ENCODE measurements at regions of chr9 and their contacts with region 1.

Region 1: GRCh38 chr9:15086778-15087324 is 176.6 kb upstream of the FREM1 start:
- DNase-seq: no peak
- H3K4me3 ChIP-seq: no peak overlapping the region
- H3K27ac ChIP-seq: no peak overlapping the region
- H3K4me1 ChIP-seq: no peaks in the 10 kb centered on the region
- H3K27me3 ChIP-seq: no peaks in the 10 kb centered on the region
- CTCF ChIP-seq: no peak
- POLR2A ChIP-seq: no peak

Region 2: GRCh38 chr9:15469406-15469805 is 382.6 kb after region 1 on chr9:
- intact Hi-C with region 1: loop called (anchors 5 kb)
- DNase-seq: no peak
- H3K4me3 ChIP-seq: no peak overlapping the region
- H3K27ac ChIP-seq: no peak overlapping the region
- H3K4me1 ChIP-seq: no peaks in the 10 kb centered on the region
- H3K27me3 ChIP-seq: no peaks in the 10 kb centered on the region
- CTCF ChIP-seq: no peak
- POLR2A ChIP-seq: no peak

Measured in vagina (tissue), 2 donors.